Activated CD4-positive, alpha-beta T cell treated with anti-CD3 and anti-CD28 coated beads, Interleukin-2, amount 10 ng/mL, durations not matched to agents 7 days and 5 days (primary cell): ENCODE measurements at regions of chr5 and their contacts with region 1.

Region 1: DNA sequence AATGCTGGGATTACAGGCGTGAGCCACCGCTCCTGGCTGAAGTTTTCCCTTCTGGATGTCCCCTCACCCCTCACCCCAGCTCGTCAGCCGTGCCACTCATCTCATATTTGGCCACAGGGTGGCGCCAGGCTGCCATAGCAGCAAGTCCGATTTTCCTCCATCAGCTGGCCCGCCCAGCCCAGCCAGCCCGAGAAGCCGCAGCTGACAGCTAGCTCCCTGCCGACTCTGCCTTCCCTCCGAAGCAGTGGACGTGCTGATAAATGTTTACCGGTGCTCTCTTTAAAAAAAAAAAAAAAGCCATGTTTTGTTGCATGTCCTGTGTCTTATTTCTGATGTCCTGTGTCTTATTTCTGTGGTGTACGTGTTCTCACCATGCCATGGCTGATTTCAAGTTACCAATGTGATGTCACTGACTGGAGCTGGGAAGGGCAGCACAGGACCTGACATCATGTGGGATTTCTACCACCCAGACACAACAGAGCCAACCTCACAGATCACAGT is 58.3 kb downstream of the PFDN1 start:
- DNase-seq: peak; percentile 90
- H3K4me3 Mint-ChIP-seq: no peak overlapping the region
- H3K27ac Mint-ChIP-seq: peak overlapping the region; percentile 81
- H3K4me1 Mint-ChIP-seq: peaks cover 45% of the 10 kb centered on the region
- H3K27me3 Mint-ChIP-seq: no peaks in the 10 kb centered on the region

Region 2: DNA sequence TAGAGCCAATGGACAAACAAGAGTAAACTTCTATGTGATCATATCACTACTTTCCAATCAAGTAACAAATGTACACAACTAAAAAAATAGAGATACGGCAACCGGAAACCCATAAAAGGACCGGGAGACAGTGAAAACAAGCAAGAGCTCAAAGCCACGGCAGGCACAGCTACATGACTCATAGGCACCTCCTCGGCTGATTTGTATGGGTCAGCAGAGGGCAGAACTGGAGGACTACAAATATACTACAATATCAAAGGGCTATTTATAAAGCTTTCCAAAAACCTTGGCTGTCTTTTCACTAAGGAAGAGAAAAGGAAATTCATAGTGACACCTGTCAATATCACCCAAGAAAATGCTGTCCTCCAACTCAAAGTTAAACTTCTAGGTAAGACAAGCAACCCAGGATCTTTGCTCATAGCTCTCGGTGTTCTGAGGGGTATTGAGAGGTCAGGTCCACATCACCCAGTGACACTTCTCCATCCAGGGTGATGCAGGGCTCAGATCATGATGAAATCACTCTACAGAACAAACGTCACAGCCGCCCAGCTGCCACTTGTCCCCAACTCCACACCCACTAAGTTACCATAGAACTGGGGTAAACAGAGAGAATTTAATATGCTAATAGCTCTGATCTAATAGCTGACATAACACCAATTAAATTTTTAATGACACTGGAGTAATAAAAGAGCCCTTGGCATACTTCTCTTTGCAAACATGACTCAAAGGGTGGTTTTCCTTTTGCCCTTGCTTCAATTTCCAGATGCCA is 17.0 kb after region 1 on chr5:
- CTCF ChIA-PET with region 1: interaction called, 59 read pairs
- POLR2A ChIA-PET with region 1: no interaction called
- DNase-seq: peak; percentile 33
- H3K4me3 Mint-ChIP-seq: no peak overlapping the region
- H3K27ac Mint-ChIP-seq: peak overlapping the region; percentile 78
- H3K4me1 Mint-ChIP-seq: peaks cover 81% of the 10 kb centered on the region
- H3K27me3 Mint-ChIP-seq: no peaks in the 10 kb centered on the region

Region 3: GRCh38 chr5:140346348-140347101 is 102.0 kb after region 1 on chr5 and contains the start of gene HBEGF:
- CTCF ChIA-PET with region 1: interaction called, 88 read pairs
- POLR2A ChIA-PET with region 1: interaction called, 7 read pairs
- DNase-seq: peak; percentile 55
- H3K4me3 Mint-ChIP-seq: peak within 1 kb of the TSS; percentile 85
- H3K27ac Mint-ChIP-seq: peak within 1 kb of the TSS; percentile 75
- H3K4me1 Mint-ChIP-seq: peaks cover 68% of the 10 kb centered on the region
- H3K27me3 Mint-ChIP-seq: peaks cover 4% of the 10 kb centered on the region
- total RNA-seq, gene HBEGF: 13.7 to 15.4 TPM

Region 4: DNA sequence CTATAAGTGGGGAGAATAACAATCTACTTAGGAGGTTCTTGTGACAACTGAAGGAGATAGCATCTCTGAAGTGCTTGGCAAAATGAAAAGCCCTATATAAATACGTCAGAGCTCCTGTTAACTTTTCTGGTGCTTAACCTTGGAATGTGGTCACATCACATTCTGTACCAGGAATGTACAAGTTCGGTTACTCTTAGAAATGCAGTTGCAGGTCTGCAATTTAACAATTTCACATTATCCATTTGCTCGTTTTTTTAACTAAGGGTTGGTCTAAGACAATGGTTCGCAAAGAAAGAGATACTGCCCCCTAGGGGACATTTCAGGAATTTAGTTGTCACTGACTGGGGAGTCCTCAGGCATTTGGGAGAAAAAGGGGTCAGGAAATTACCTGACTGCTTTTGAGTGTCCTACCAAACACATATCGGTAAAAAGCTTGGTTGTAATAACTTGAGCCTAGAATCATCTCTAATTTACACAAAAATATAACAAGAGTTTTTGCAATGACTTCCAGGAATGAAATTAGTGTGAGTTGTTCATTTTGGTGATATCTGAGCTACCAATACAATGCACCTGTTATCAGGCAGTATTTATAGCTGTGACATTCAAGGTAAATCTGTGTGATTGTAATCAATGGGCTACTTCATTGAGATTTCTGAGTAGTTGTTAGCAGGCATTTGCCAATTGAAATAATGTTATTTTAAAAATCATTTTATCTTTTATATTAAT is 107.2 kb after region 1 on chr5:
- CTCF ChIA-PET with region 1: interaction called, 88 read pairs
- POLR2A ChIA-PET with region 1: no interaction called
- DNase-seq: peak; percentile 87
- H3K4me3 Mint-ChIP-seq: no peak overlapping the region
- H3K27ac Mint-ChIP-seq: peak overlapping the region; percentile 68
- H3K4me1 Mint-ChIP-seq: peaks cover 30% of the 10 kb centered on the region
- H3K27me3 Mint-ChIP-seq: peaks cover 4% of the 10 kb centered on the region

Region 5: GRCh38 chr5:140357726-140358093 is 113.1 kb after region 1 on chr5:
- CTCF ChIA-PET with region 1: interaction called, 86 read pairs
- POLR2A ChIA-PET with region 1: no interaction called
- DNase-seq: peak; percentile 80
- H3K4me3 Mint-ChIP-seq: peak overlapping the region; percentile 69
- H3K27ac Mint-ChIP-seq: peak overlapping the region; percentile 80
- H3K4me1 Mint-ChIP-seq: peaks cover 11% of the 10 kb centered on the region
- H3K27me3 Mint-ChIP-seq: peaks cover 7% of the 10 kb centered on the region

Region 6: DNA sequence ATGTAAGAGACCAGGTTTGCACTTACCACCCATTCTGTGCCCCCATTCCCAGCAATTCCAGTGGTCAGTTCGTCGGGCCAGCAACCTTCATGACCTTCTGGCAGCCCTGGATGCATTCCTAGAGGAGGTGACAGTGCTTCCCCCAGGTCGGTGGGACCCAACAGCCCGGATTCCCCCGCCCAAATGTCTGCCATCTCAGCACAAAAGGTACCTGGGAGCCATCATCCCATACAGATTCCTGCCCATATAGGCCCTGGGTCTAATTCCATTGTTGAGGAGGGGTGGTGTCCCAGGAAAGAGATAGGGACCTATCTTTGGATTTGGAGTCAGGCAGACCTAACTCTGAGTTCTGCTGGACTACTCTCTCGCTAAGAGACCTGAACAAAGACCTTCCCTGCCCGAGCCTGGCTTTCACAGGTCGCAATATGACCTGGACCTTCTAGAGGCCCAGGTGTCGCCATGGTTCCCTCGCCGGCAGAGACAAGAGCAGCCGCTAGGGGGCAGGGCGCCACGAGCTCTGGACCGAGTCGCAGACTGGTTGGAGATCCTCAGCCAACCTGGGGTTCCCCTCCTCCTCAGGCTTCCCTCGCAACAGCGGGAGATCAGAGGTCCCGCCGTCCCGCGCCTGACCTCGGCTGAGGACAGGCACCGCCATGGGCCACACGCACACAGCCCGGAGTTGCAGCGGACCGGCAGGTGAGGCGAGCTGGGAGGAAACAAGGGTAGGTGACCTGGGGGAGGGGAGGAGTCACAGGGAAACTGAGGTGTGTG is 118.5 kb after region 1 on chr5:
- CTCF ChIA-PET with region 1: interaction called, 33 read pairs
- POLR2A ChIA-PET with region 1: no interaction called
- DNase-seq: peak; percentile 86
- H3K4me3 Mint-ChIP-seq: peak overlapping the region; percentile 61
- H3K27ac Mint-ChIP-seq: peak overlapping the region; percentile 60
- H3K4me1 Mint-ChIP-seq: peaks cover 5% of the 10 kb centered on the region
- H3K27me3 Mint-ChIP-seq: peaks cover 5% of the 10 kb centered on the region

Region 7: DNA sequence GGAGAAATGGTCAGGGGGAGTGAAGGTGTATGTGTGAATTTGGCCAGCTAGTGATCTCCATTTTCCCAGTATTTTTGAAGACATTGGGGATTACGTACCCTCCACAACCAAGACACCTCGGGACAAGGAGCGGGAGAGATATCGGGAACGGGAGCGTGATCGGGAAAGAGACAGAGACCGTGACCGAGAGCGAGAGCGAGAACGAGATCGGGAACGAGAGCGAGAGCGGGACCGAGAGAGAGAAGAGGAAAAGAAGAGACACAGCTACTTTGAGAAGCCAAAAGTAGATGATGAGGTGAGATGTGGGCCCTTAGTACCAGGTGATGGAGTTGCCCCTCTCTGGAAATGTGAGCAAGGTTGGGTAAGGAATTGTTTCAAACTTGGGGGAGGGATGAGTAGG is 414.3 kb after region 1 on chr5:
- CTCF ChIA-PET with region 1: no interaction called
- POLR2A ChIA-PET with region 1: no interaction called
- DNase-seq: no peak
- H3K4me3 Mint-ChIP-seq: no peak overlapping the region
- H3K27ac Mint-ChIP-seq: no peak overlapping the region
- H3K4me1 Mint-ChIP-seq: peaks cover 10% of the 10 kb centered on the region
- H3K27me3 Mint-ChIP-seq: no peaks in the 10 kb centered on the region